Activated naive CD4-positive, alpha-beta T cell treated with anti-CD3 and anti-CD28 coated beads for 36 hours (primary cell): ENCODE measurements at regions of chr4 and their contacts with region 1.

Region 1: DNA sequence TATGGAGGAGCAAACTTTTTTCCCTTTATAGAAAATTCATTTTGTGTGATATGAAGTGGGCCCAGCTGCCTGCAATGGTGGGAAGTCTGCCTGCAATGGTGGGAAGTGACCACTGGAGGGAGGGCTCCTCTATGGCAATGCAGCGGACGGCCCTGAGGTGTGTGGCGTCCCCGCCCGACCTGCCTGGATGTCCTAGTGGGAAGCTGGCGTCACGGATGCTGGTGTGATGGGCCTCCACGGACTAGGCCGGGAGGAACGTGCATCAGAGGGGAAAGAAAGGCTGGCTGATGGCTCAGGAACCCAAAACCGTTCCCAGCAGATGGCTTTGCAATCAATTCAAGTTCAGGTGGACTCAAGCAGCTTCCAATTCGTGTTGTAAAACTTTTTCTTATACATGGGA is 177.9 kb downstream of the AFAP1 start:
- DNase-seq: peak; percentile 69
- H3K4me3 Mint-ChIP-seq: no peak overlapping the region
- H3K27ac Mint-ChIP-seq: peak overlapping the region; percentile 76
- H3K4me1 Mint-ChIP-seq: peaks cover 39% of the 10 kb centered on the region
- H3K27me3 Mint-ChIP-seq: no peaks in the 10 kb centered on the region

Region 2: GRCh38 chr4:7506119-7506518 is 255.6 kb before region 1 on chr4:
- CTCF ChIA-PET with region 1: no interaction called
- intact Hi-C with region 1: no loop called
- DNase-seq: no peak
- H3K4me3 Mint-ChIP-seq: no peak overlapping the region
- H3K27ac Mint-ChIP-seq: no peak overlapping the region
- H3K4me1 Mint-ChIP-seq: no peaks in the 10 kb centered on the region
- H3K27me3 Mint-ChIP-seq: peaks cover 23% of the 10 kb centered on the region

Region 3: DNA sequence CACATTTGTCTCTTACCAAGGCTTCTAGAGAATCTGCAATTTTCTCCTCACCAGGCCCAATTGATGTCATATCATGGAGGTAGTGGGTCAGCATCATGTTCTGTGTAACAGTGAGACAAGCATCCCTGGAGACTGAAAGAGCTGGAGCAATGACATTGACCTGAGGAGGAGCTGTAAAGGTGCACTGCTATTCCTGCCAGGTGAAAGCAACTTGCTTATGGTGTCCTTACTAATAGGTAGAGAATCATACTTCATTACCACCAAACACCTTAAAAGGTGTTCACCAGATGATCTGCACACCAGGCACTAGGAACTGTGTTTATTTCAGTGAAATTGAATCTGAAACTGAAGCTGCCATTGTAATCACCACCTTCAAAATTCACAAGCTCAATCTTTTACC is 10.7 kb before region 1 on chr4:
- CTCF ChIA-PET with region 1: interaction called, 5 read pairs
- intact Hi-C with region 1: loop called (anchors 1 kb)
- DNase-seq: no peak
- H3K4me3 Mint-ChIP-seq: no peak overlapping the region
- H3K27ac Mint-ChIP-seq: no peak overlapping the region
- H3K4me1 Mint-ChIP-seq: peaks cover 34% of the 10 kb centered on the region
- H3K27me3 Mint-ChIP-seq: no peaks in the 10 kb centered on the region

Region 4: GRCh38 chr4:7781366-7781765 is 19.6 kb after region 1 on chr4:
- CTCF ChIA-PET with region 1: interaction called, 4 read pairs
- intact Hi-C with region 1: loop called (anchors 2 kb)
- DNase-seq: peak; percentile 44
- H3K4me3 Mint-ChIP-seq: peak overlapping the region; percentile 43
- H3K27ac Mint-ChIP-seq: peak overlapping the region; percentile 88
- H3K4me1 Mint-ChIP-seq: peaks cover 62% of the 10 kb centered on the region
- H3K27me3 Mint-ChIP-seq: no peaks in the 10 kb centered on the region

Region 5: GRCh38 chr4:7960790-7961655 is 199.3 kb after region 1 on chr4:
- CTCF ChIA-PET with region 1: no interaction called
- intact Hi-C with region 1: loop called (anchors 1 kb)
- DNase-seq: peak; percentile 87
- H3K4me3 Mint-ChIP-seq: peak overlapping the region; percentile 2
- H3K27ac Mint-ChIP-seq: peak overlapping the region; percentile 68
- H3K4me1 Mint-ChIP-seq: peaks cover 48% of the 10 kb centered on the region
- H3K27me3 Mint-ChIP-seq: no peaks in the 10 kb centered on the region